ENCODE measurements at regions of chr15 and their contacts with region 1.

Region 1: DNA sequence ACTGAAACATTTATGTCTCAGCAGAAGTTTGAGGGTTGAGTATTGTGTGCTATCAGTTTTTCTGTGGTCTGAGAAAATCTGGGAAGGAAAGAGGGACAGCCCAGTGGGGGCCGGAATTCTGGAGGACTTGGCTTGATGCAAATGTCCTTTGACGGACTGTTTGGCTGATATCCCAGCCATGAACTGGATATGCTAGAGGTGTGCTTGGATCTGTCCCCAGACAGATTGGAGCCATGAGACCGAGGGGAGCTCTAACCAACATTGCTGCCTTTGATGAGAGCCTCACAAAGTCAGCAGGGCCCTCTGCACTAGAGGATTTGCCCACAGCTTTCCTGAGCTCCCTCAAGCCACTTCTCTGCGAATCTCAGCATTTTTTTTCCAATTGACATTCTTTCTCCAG is 405.6 kb downstream of the NTRK3 start:
- DNase-seq: no peak
- H3K4me3 ChIP-seq: no peak overlapping the region
- H3K27ac ChIP-seq: no peak overlapping the region
- H3K4me1 ChIP-seq: no peaks in the 10 kb centered on the region
- H3K27me3 ChIP-seq: no peaks in the 10 kb centered on the region
- CTCF ChIP-seq: no peak
- POLR2A ChIP-seq: no peak

Region 2: DNA sequence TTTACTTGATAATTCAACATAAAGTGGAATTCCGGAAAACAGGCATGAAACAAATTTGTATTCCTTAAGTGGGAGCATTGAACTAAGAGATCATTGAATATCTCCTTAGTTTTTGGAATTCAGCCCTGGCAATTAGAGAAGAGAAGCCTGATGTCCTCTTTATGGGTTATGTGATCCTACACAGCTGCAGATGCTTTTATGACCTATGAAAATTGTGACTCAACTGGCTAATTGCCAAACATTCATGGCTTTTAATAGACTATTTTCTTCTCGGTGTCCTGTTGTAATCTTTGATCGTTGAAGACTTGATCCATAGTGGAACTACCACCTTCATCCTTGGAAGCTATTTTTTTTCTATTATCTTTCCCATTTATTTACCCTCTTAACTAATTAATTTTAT is 1725.1 kb before region 1 on chr15:
- CTCF ChIA-PET with region 1: no interaction called
- POLR2A ChIA-PET with region 1: no interaction called
- dilution Hi-C with region 1: no loop called
- intact Hi-C with region 1: loop called (anchors 10 kb)
- DNase-seq: no peak
- H3K4me3 ChIP-seq: no peak overlapping the region
- H3K27ac ChIP-seq: no peak overlapping the region
- H3K4me1 ChIP-seq: no peaks in the 10 kb centered on the region
- H3K27me3 ChIP-seq: no peaks in the 10 kb centered on the region
- CTCF ChIP-seq: no peak
- POLR2A ChIP-seq: no peak

Region 3: GRCh38 chr15:88246666-88247446 is 395.9 kb after region 1 on chr15:
- CTCF ChIA-PET with region 1: no interaction called
- POLR2A ChIA-PET with region 1: no interaction called
- dilution Hi-C with region 1: no loop called
- intact Hi-C with region 1: no loop called
- DNase-seq: peak; percentile 50
- H3K4me3 ChIP-seq: no peak overlapping the region
- H3K27ac ChIP-seq: no peak overlapping the region
- H3K4me1 ChIP-seq: no peaks in the 10 kb centered on the region
- H3K27me3 ChIP-seq: no peaks in the 10 kb centered on the region
- CTCF ChIP-seq: peak; percentile 89 to 92
- POLR2A ChIP-seq: no peak

Region 4: GRCh38 chr15:88334436-88334835 is 483.5 kb after region 1 on chr15:
- CTCF ChIA-PET with region 1: no interaction called
- POLR2A ChIA-PET with region 1: no interaction called
- dilution Hi-C with region 1: no loop called
- intact Hi-C with region 1: no loop called
- DNase-seq: peak; percentile 1
- H3K4me3 ChIP-seq: no peak overlapping the region
- H3K27ac ChIP-seq: no peak overlapping the region
- H3K4me1 ChIP-seq: no peaks in the 10 kb centered on the region
- H3K27me3 ChIP-seq: no peaks in the 10 kb centered on the region
- CTCF ChIP-seq: no peak
- POLR2A ChIP-seq: no peak

Measured in endothelial cell of umbilical vein (primary cell).